Transverse colon (tissue), 4 donors: ENCODE measurements at regions of chr1 and their contacts with region 1.

Region 1: DNA sequence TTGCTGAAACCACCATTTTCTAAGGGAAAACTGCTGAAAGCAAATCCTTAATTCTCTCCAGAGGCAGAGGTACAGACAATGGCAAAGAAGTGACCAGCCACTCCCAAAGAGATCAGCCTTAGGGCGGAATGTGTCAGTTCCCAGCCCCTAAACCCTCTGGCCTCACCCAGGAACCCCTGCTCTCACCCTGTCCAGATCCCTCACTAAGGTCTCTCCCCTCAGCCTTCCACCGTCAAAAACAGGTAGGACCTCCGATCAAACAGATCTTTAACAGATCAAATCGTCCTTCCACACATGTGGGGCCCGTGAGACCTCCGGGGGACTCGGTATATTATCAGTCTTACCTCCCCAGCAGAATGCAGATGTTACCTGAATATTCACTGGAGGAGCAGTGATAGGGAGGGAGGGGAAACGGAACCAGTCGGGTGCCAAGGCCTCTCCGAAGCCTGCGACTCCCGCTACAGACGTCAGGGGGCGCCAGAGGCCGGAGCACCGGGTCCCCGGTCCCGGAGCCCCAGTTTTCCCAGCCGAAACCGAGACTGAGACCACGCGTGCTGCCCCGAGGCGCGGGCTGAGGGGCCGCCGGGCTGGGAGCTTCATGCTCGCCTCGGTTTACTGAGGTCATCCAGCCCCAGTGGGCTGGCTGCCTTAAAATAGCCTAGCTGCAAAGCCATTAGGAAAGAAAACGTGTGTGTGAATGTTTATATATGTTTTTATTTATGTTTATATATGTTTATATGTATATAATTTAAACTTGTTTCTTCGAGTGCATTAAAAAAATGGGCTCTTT is 23.6 kb downstream of the GPA33 start:
- DNase-seq: peak; percentile 85
- H3K4me3 ChIP-seq: peak overlapping the region in 2 of 4 donors; percentile 12 to 29
- H3K27ac ChIP-seq: peak overlapping the region; percentile 69 to 80 (median 76)
- H3K4me1 ChIP-seq: peaks cover 0 to 25% (median 17%) of the 10 kb centered on the region in 4 donors
- H3K27me3 ChIP-seq: no peaks in the 10 kb centered on the region
- CTCF ChIP-seq: peak; percentile 94 to 97 (median 95)
- EP300 ChIP-seq: no peak
- POLR2A ChIP-seq: no peak

Region 2: DNA sequence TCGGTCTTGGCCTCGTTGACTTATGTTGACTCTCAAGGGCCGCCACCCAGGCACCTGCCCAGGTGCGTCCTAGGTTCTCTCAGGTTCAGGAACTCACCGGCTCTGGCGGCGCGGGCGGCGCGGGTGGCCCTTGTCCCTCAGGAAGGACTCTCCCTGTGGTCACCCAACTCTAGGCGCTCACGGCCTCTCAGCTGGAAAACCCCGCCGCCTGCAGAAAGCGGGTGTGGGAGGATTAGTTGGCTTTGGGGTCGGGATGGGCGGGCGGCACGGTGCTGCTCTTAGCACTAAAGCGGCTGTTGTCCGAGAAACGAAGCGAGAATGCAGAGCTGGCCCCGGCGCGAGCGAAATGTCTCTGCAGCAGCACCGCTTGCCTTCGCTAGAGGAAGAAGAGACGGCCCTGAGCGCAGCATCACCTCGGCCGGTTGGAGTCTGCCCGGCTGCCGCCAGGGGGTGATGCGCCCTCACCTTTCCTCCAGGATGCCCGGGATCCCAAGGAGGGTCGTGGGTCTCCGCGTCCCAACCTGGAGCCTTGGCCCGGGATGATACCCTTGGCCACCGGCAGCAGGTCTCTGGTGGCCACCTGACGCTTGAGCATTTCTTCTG is 182.4 kb before region 1 on chr1:
- in situ Hi-C with region 1: loop called in 1 of 4 experiments (anchors 10 kb)
- intact Hi-C with region 1: no loop called
- DNase-seq: peak; percentile 53
- H3K4me3 ChIP-seq: peak overlapping the region in 1 of 4 donors; percentile 37
- H3K27ac ChIP-seq: no peak overlapping the region
- H3K4me1 ChIP-seq: peaks cover 0 to 8% (median 7%) of the 10 kb centered on the region in 4 donors
- H3K27me3 ChIP-seq: peaks cover 27% of the 10 kb centered on the region
- CTCF ChIP-seq: peak; percentile 66 to 76 (median 70)
- EP300 ChIP-seq: no peak
- POLR2A ChIP-seq: no peak

Region 3: GRCh38 chr1:167022384-167022783 is 44.1 kb before region 1 on chr1:
- in situ Hi-C with region 1: no loop called
- intact Hi-C with region 1: no loop called
- DNase-seq: no peak
- H3K4me3 ChIP-seq: no peak overlapping the region
- H3K27ac ChIP-seq: no peak overlapping the region
- H3K4me1 ChIP-seq: no peaks in the 10 kb centered on the region
- H3K27me3 ChIP-seq: no peaks in the 10 kb centered on the region
- CTCF ChIP-seq: no peak
- EP300 ChIP-seq: no peak
- POLR2A ChIP-seq: no peak

Region 4: DNA sequence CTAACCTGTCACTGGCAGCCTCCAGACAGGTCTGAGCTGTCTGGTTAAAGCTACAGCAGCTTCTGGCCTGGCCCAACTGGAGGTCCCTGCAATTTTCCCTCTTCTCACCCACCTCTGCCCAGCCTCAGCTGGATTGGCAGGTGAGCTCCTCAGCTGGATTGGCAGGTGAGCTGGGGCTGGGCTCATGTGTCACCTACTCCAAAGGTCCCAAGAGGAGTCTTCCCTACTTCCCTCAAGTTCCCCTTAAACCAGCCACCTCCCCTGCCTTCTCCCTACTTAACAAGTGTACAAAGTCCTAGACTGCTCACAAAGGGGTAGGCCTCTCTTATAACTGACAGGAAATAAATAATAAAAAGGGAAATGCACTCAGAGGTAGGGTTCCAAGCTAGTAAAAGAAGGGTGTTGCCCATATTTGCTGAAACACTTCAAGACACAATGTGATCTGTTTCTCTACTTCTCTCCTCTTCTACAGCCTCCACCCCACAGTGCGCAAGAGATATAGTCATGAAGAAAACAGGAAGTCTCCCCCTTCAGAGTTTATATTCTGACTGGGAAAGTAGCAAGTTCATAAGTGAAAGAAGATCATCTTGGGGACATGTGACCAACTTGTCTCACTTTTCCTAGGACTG is 23.9 kb after region 1 on chr1 and contains the start of gene GPA33:
- in situ Hi-C with region 1: no loop called
- intact Hi-C with region 1: no loop called
- DNase-seq: peak; percentile 88
- H3K4me3 ChIP-seq: peak within 1 kb of the TSS in 3 of 4 donors; percentile 28 to 51 (median 30)
- H3K27ac ChIP-seq: peak within 1 kb of the TSS; percentile 85 to 95 (median 90)
- H3K4me1 ChIP-seq: peaks cover 0 to 27% (median 19%) of the 10 kb centered on the region in 4 donors
- H3K27me3 ChIP-seq: no peaks in the 10 kb centered on the region
- CTCF ChIP-seq: no peak
- EP300 ChIP-seq: no peak
- POLR2A ChIP-seq: peak; percentile 98
- total RNA-seq, gene GPA33: 87.4 to 568 (median 509) TPM

Region 5: GRCh38 chr1:167121375-167122120 is 55.0 kb after region 1 on chr1:
- in situ Hi-C with region 1: loop called in 1 of 4 experiments (anchors 5 kb)
- intact Hi-C with region 1: no loop called
- DNase-seq: peak; percentile 87
- H3K4me3 ChIP-seq: peak overlapping the region; percentile 12 to 45 (median 34)
- H3K27ac ChIP-seq: peak overlapping the region; percentile 64 to 81 (median 76)
- H3K4me1 ChIP-seq: peaks cover 0 to 22% (median 11%) of the 10 kb centered on the region in 4 donors
- H3K27me3 ChIP-seq: no peaks in the 10 kb centered on the region
- CTCF ChIP-seq: no peak
- EP300 ChIP-seq: no peak
- POLR2A ChIP-seq: peak; percentile 69

Region 6: GRCh38 chr1:167219646-167220536 is 153.4 kb after region 1 on chr1:
- in situ Hi-C with region 1: loop called in 1 of 4 experiments (anchors 10 kb)
- intact Hi-C with region 1: no loop called
- DNase-seq: peak; percentile 93
- H3K4me3 ChIP-seq: peak overlapping the region; percentile 49 to 92 (median 82)
- H3K27ac ChIP-seq: peak overlapping the region; percentile 92 to 100 (median 96)
- H3K4me1 ChIP-seq: peaks cover 10 to 33% (median 23%) of the 10 kb centered on the region in 4 donors
- H3K27me3 ChIP-seq: no peaks in the 10 kb centered on the region
- CTCF ChIP-seq: peak in 3 of 5 experiments; percentile 12 to 44 (median 39)
- EP300 ChIP-seq: no peak
- POLR2A ChIP-seq: peak; percentile 58

Region 7: DNA sequence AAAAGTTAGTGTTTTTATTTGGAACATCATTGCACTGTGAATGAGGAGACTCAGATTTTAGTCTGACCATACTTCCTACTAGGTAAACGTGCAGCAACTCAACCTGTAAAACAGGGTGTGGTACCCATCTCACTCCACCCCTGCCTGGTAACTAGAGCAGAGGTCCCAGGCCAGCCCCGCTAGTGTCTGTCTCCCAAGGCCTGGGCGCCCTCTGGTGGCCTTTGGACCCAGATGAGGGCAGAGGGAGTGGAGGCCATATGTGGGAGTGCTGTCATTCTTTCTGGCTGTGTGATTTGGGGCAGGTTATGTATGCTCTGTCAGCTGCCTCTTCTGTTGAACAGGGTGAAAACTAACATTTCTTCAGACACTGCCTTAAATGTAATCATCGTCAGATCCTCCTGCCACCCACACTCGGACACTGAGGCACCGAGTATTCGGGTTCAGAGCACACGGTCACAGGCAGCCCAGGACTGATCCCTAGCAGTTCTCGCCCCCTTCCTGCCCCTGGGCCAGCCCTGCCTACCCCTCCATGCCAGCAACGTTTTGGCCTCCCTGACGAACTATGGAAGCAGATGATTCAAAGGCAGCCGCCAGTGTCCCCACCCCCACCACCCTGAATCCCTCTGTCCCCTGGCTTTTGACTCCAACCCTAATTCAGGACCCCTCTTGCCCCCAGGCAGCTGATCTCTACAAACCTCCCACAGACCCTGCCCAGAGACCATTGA is 375.8 kb after region 1 on chr1:
- in situ Hi-C with region 1: loop called (anchors 5 to 25 kb)
- intact Hi-C with region 1: loop called (anchors 5 kb)
- DNase-seq: peak; percentile 96
- H3K4me3 ChIP-seq: no peak overlapping the region
- H3K27ac ChIP-seq: peak overlapping the region; percentile 51 to 82 (median 76)
- H3K4me1 ChIP-seq: peaks cover 0 to 21% (median 15%) of the 10 kb centered on the region in 4 donors
- H3K27me3 ChIP-seq: peaks cover 9% of the 10 kb centered on the region
- CTCF ChIP-seq: peak; percentile 82 to 92 (median 85)
- EP300 ChIP-seq: peak; percentile 16
- POLR2A ChIP-seq: no peak

Region 8: DNA sequence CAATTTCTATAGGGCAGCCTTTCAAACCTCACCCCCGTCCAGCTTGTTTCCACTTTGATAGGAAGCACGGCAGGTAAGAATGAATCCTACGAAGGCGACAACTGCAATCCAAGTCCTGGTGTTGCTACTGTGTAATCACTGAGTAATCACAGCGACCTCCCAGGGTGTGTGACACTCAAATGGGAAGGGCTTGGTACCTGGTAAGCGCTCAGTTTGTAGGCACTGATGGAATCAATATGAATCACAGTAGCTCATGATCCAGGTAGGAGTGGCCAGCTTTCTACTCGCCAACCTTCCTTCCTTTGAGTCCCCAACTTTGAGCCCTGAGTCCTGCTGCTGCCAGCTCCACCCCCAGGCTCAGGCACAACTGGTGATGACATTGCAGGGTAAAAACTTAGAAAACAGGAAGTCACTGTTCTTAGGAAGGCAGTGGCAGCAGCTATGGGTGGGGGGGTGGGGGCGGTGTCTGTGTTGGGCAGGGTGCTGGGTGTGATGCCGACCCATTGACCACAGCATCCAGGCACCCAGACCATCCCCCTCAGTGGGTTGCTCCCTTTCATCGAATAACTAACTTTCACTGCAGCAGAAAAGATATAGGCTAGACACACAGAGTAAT is 381.1 kb after region 1 on chr1:
- in situ Hi-C with region 1: loop called (anchors 5 to 25 kb)
- intact Hi-C with region 1: loop called (anchors 5 kb)
- DNase-seq: peak; percentile 64
- H3K4me3 ChIP-seq: no peak overlapping the region
- H3K27ac ChIP-seq: peak overlapping the region; percentile 37 to 57 (median 52)
- H3K4me1 ChIP-seq: peaks cover 0 to 8% (median 5%) of the 10 kb centered on the region in 4 donors
- H3K27me3 ChIP-seq: no peaks in the 10 kb centered on the region
- CTCF ChIP-seq: no peak
- EP300 ChIP-seq: no peak
- POLR2A ChIP-seq: peak; percentile 41

Region 9: DNA sequence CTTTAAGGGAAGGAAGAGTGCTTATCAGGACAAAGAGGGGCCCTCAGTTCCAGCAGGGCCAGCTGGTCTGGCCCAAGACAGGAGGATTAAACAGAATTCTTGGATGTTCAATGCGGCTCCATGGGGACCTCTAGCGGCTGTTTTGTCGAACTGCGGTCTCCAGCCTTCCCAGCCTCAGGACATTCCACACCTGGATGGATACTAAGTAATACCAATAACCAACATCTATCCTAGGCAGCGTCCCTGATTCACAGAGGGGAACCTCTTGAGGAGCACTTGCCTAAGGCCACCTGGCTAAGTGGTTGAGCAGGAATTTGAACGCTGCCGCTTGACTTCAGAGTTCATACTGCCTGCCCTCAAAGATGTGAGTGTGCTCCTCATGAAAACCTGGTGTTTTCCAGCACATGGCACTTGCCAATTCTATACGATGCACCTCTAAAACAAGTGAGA is 467.3 kb after region 1 on chr1:
- in situ Hi-C with region 1: loop called (anchors 10 to 25 kb)
- intact Hi-C with region 1: loop called (anchors 10 kb)
- DNase-seq: peak; percentile 74
- H3K4me3 ChIP-seq: no peak overlapping the region
- H3K27ac ChIP-seq: no peak overlapping the region
- H3K4me1 ChIP-seq: no peaks in the 10 kb centered on the region
- H3K27me3 ChIP-seq: no peaks in the 10 kb centered on the region
- CTCF ChIP-seq: peak; percentile 73 to 91 (median 88)
- EP300 ChIP-seq: no peak
- POLR2A ChIP-seq: no peak